ENCODE measurements at regions of chr3 and their contacts with region 1.

Region 1: DNA sequence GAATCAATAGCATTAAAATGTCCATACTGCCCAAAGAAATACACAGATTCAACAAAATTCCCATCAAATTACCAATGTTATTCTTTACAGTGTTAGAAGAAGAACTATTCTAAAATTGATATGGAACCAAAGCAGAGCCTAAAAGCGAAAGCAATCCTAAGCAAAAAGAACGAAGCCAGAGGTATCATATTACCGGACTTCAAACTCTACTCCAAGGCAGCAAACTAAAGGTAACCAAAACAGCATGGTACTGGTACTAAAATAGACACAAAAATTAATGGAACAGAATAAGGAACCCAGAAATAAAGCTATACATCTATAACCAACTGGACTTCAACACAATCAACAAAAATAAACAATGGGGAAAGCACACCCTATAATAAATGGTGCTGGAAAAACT is 167.5 kb downstream of the ADAMTS9 start:
- DNase-seq: no peak
- H3K4me3 ChIP-seq: no peak overlapping the region
- H3K27ac ChIP-seq: no peak overlapping the region
- H3K4me1 ChIP-seq: no peaks in the 10 kb centered on the region
- H3K27me3 ChIP-seq: no peaks in the 10 kb centered on the region
- CTCF ChIP-seq: no peak
- EP300 ChIP-seq: no peak
- POLR2A ChIP-seq: no peak

Region 2: DNA sequence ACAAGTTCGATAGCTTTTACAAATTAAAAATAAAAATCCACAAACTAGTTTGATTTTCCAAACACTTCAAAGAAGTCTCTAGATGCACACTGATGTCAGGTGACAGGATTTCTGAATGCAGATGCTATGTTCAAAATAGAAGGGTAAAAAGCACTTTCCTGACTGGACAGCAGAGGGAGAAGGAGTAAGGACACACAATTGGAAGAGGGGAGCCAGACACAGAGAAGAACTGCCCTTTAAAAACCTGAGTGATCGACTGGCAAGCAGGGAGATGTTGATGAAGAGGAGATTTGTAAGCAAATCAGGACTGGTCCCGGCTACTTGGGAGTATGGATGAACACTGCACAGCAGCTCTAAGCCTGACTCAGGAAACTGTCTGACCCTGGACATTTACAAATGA is 905.5 kb after region 1 on chr3:
- intact Hi-C with region 1: loop called (anchors 10 kb)
- DNase-seq: no peak
- H3K4me3 ChIP-seq: no peak overlapping the region
- H3K27ac ChIP-seq: no peak overlapping the region
- H3K4me1 ChIP-seq: peaks cover 0 to 4% (median 0%) of the 10 kb centered on the region in 4 donors
- H3K27me3 ChIP-seq: no peaks in the 10 kb centered on the region
- CTCF ChIP-seq: peak; percentile 23 to 33 (median 27)
- EP300 ChIP-seq: no peak
- POLR2A ChIP-seq: no peak